ENCODE measurements at regions of chr14 and their contacts with region 1.

Region 1: DNA sequence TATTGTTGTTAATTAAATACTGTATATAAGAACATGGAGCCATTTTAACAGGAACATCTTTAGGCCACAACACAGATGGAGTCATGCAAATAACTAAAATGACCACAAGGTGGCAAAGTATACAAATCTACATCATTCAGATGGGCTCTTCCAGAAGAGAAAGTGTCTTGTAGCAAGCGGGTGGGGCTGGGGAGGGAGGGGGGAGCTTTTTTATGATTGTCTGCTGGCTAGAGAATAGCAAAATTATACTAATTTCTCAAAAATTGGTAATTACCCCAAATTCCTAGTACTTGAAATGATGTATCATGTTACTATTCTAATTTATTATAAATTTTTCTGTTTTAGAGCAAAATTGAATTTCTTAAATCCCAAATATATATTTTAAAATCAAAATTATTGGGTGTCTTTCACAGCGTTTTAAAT is 378.7 kb downstream of the PRKD1 start:
- DNase-seq: no peak
- ATAC-seq: peak in 3 of 4 donors; percentile 49 to 76 (median 74)
- H3K4me3 ChIP-seq: no peak overlapping the region
- H3K27ac ChIP-seq: no peak overlapping the region
- H3K4me1 ChIP-seq: no peaks in the 10 kb centered on the region
- H3K27me3 ChIP-seq: peaks cover 0 to 8% (median 0%) of the 10 kb centered on the region in 9 donors
- CTCF ChIP-seq: peak; percentile 49 to 73 (median 64)
- POLR2A ChIP-seq: no peak

Region 2: DNA sequence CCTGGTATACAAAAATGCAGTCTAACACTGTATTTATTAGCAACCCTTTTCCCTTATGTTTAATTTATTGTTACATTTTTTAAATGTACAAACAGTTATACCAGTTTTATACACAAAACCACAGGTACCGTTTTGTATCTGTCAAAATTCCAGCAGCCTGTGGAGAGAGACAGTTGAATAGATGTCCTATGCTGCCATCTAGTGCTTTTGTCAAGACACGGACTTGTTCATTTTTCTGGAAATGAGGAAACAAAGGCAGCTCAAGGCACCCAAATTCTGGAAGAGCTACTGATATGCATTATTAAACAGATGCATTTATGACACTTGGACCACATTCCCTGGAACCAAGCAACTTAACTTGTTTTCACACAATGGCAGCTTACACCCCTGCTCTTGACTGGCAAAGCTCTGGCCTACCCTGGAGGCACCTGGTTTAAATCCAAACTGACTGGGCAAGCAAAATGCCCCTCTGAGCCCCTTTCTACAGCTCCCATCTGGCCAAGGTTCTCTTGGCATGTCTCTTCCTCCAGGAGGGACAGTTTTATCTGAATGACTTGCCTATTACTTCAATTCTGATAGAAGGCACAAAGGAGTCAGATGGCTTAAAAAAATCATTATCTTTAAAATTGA is 665.6 kb after region 1 on chr14:
- intact Hi-C with region 1: loop called (anchors 2 to 5 kb)
- DNase-seq: no peak
- ATAC-seq: peak in 2 of 4 donors; percentile 33 to 41
- H3K4me3 ChIP-seq: no peak overlapping the region
- H3K27ac ChIP-seq: no peak overlapping the region
- H3K4me1 ChIP-seq: no peaks in the 10 kb centered on the region
- H3K27me3 ChIP-seq: peaks cover 0 to 6% (median 0%) of the 10 kb centered on the region in 9 donors
- CTCF ChIP-seq: peak in 11 of 12 donors; percentile 36 to 67 (median 55)
- POLR2A ChIP-seq: no peak

Region 3: GRCh38 chr14:30443368-30444007 is 894.5 kb after region 1 on chr14:
- intact Hi-C with region 1: loop called in 2 of 10 experiments (anchors 5 to 10 kb)
- DNase-seq: no peak
- ATAC-seq: no peak
- H3K4me3 ChIP-seq: no peak overlapping the region
- H3K27ac ChIP-seq: no peak overlapping the region
- H3K4me1 ChIP-seq: no peaks in the 10 kb centered on the region
- H3K27me3 ChIP-seq: peaks cover 0 to 3% (median 0%) of the 10 kb centered on the region in 9 donors
- CTCF ChIP-seq: peak; percentile 26 to 64 (median 46)
- POLR2A ChIP-seq: no peak

Measured in heart left ventricle (tissue), 16 donors.